G401 (cell line): ENCODE measurements at regions of chr21 and their contacts with region 1.

Region 1: GRCh38 chr21:45615145-45615711 is 28.3 kb upstream of the PCBP3 start:
- DNase-seq: peak; percentile 61

Region 2: GRCh38 chr21:45347712-45348499 is 267.3 kb before region 1 on chr21:
- in situ Hi-C with region 1: no loop called
- DNase-seq: no peak

Region 3: GRCh38 chr21:45578176-45578801 is 36.9 kb before region 1 on chr21:
- in situ Hi-C with region 1: no loop called
- DNase-seq: no peak

Region 4: DNA sequence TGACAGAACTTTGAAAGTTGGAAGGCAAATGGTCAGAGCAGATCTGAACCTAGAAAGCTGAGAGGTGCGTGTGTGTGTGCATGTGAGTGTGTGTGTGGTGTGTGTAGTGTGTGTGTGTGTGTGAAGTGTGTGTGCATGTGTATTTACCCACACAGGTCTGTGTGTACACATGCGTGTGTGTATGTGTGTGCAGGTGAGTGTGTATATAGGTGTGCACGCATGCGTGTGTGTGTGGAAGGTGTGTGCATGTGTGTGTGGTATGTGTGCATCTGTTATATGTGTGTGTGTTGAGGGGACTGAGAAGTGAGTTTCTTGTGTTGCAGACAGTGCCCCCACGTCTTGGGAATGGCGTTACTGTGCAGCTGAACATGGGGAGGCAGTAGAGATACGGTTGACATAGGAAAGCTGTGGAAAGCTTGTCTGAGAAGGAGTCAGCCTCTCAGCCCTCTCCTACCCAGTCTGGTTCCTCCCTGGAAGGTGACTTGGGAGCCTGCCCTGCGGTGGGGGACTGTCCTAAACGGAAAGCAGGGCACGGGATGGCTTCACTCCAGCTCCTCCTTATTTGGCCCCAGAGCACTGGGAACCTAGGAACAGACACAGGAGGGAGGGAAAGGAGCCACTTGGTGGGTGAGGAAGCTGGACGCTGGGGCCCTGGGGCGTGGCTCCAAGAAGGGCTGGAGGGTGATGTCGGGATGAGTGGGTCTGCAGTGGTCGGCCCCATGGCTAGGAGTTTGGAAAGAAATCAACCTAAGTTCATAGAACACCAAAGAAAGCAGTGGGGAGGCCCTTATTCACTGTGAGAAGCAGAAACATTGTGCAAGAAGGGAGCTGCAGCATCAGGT is 125.5 kb after region 1 on chr21:
- in situ Hi-C with region 1: no loop called
- DNase-seq: no peak

Region 5: DNA sequence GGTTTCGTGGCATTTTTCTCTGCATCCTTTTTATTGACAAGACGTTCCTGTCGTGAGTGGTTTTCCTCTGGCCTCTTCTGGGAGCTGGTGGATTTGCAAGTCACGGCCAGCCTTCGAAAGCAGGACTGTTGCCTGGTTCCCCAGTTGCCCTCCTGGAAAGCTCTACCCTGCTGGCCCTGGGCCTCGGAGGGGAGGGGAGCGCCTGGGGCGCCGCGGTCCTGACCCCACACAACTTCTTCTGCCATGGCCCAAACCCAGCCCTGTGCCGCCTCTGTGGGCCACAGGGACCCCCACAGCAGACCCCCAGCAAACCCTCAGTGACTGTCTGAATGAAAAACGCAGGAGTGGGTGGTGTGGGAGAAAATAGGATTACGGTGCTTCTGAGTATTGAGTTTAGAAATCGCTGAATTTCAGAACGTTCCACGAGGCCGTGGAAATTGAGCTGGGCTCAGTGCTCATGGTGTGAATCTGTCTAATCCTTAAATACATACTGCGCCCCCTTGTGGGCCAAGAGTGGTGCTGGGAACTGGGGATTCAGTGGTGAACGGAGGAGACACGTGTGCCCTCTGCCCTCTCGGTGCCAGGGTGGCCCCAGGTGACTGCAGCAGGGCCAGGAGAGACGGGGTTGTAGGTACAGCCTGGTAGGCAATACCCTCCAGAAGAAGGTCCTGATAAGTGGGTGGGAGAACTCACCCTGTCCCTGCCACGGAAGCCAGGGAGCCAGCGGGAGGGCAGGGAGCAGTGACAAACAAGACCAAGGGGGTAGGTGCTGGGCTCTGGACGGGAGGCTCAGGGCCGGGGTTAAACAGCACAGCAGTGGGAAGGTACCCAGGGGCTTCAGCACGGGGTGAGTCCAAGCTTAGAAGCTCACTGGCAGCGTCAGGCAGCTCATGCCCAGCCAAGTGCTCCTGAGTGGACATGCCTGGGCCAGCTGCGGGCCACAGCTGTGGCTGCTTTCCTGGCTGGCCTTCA is 265.2 kb after region 1 on chr21:
- in situ Hi-C with region 1: loop called (anchors 10 kb)
- DNase-seq: peak; percentile 73